Caco-2 (cell line): ENCODE measurements at regions of chr18 and their contacts with region 1.

Region 1: GRCh38 chr18:350953-351572 is 83.2 kb upstream of the THOC1 start:
- DNase-seq: no peak
- H3K4me3 ChIP-seq: no peak overlapping the region
- H3K4me3 Mint-ChIP-seq: no peak overlapping the region
- H3K27ac Mint-ChIP-seq: no peak overlapping the region
- H3K4me1 ChIP-seq: no peaks in the 10 kb centered on the region
- H3K4me1 Mint-ChIP-seq: no peaks in the 10 kb centered on the region
- H3K27me3 ChIP-seq: no peaks in the 10 kb centered on the region
- H3K27me3 Mint-ChIP-seq: no peaks in the 10 kb centered on the region
- CTCF ChIP-seq: no peak

Region 2: GRCh38 chr18:417495-417894 is 66.4 kb after region 1 on chr18:
- CTCF ChIA-PET with region 1: no interaction called
- POLR2A ChIA-PET with region 1: interaction called, 13 read pairs
- intact Hi-C with region 1: no loop called
- DNase-seq: no peak
- H3K4me3 ChIP-seq: no peak overlapping the region
- H3K4me3 Mint-ChIP-seq: no peak overlapping the region
- H3K27ac Mint-ChIP-seq: no peak overlapping the region
- H3K4me1 ChIP-seq: peaks cover 10% of the 10 kb centered on the region
- H3K4me1 Mint-ChIP-seq: peaks cover 6% of the 10 kb centered on the region
- H3K27me3 ChIP-seq: no peaks in the 10 kb centered on the region
- H3K27me3 Mint-ChIP-seq: no peaks in the 10 kb centered on the region
- CTCF ChIP-seq: no peak

Region 3: DNA sequence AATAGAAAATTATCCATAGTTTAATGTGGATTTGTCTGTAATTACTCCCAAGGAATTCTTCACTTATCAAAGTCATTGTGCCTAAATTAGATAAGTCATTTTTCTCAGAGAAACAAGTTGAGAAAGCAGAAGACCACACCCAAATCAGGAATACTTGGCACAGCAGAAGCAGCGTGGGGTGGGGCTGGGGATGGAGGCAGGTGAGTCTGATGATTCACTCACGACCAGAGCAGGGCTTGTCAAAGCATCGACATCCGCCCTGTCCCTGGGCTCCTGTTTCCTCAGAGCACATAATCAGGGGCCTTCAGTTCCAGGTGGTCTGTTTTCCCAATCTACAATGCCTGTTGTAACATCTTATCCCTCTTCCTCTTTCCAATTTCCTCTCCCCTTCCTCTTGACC is 181.0 kb after region 1 on chr18:
- CTCF ChIA-PET with region 1: no interaction called
- POLR2A ChIA-PET with region 1: no interaction called
- intact Hi-C with region 1: no loop called
- DNase-seq: no peak
- H3K4me3 ChIP-seq: no peak overlapping the region
- H3K4me3 Mint-ChIP-seq: no peak overlapping the region
- H3K27ac Mint-ChIP-seq: no peak overlapping the region
- H3K4me1 ChIP-seq: peaks cover 10% of the 10 kb centered on the region
- H3K4me1 Mint-ChIP-seq: peaks cover 18% of the 10 kb centered on the region
- H3K27me3 ChIP-seq: no peaks in the 10 kb centered on the region
- H3K27me3 Mint-ChIP-seq: no peaks in the 10 kb centered on the region
- CTCF ChIP-seq: no peak